ENCODE measurements at regions of chr15 and their contacts with region 1.

Region 1: DNA sequence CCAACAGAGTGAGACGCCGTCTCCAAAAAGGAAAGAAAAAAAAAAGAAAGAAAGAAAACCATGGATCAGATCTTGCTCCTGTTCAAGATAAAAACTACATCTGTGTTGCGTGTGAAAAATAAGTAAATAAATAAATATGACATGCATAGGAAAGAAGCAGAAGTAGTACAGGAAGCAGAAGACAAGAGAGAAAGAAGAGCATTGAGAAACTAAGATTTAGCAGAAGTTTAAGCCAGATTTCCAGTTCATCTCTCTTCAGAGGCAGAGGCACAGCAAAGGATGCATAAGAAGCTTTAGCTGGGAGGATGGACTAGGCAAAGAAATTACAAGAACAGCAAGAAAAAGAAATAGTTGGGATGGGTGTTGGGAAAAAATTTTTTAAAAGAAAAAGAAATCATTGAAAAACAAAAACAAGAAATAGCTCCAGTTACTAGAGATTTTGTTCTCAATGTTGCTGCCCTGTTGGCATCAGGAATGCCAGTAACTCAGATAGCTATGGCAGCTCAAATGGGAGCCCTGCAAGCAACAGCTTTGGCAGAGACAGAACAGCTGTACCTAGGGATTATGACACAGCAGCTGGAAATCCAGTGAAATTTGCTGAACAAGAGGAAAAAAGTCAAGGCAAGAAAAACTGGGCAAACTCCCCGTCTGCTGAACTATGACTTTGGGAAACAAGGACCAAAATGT is 17.3 kb downstream of the AP3S2 start:
- DNase-seq: no peak
- H3K4me3 ChIP-seq: no peak overlapping the region
- H3K27ac ChIP-seq: no peak overlapping the region
- H3K4me1 ChIP-seq: peaks cover 0 to 6% (median 0%) of the 10 kb centered on the region in 4 donors
- H3K27me3 ChIP-seq: no peaks in the 10 kb centered on the region
- CTCF ChIP-seq: no peak

Region 2: GRCh38 chr15:89749951-89750559 is 126.5 kb before region 1 on chr15:
- intact Hi-C with region 1: no loop called
- DNase-seq: no peak
- H3K4me3 ChIP-seq: peak overlapping the region; percentile 66 to 87
- H3K27ac ChIP-seq: peak overlapping the region; percentile 64 to 69
- H3K4me1 ChIP-seq: peaks cover 0 to 23% (median 14%) of the 10 kb centered on the region in 4 donors
- H3K27me3 ChIP-seq: peaks cover 0 to 38% of the 10 kb centered on the region in 2 donors
- CTCF ChIP-seq: no peak

Region 3: GRCh38 chr15:89760303-89761008 is 116.1 kb before region 1 on chr15:
- intact Hi-C with region 1: loop called (anchors 2 kb)
- DNase-seq: peak; percentile 79 to 85
- H3K4me3 ChIP-seq: no peak overlapping the region
- H3K27ac ChIP-seq: no peak overlapping the region
- H3K4me1 ChIP-seq: peaks cover 0 to 18% (median 0%) of the 10 kb centered on the region in 4 donors
- H3K27me3 ChIP-seq: peaks cover 0 to 11% of the 10 kb centered on the region in 2 donors
- CTCF ChIP-seq: peak; percentile 96 to 97

Region 4: DNA sequence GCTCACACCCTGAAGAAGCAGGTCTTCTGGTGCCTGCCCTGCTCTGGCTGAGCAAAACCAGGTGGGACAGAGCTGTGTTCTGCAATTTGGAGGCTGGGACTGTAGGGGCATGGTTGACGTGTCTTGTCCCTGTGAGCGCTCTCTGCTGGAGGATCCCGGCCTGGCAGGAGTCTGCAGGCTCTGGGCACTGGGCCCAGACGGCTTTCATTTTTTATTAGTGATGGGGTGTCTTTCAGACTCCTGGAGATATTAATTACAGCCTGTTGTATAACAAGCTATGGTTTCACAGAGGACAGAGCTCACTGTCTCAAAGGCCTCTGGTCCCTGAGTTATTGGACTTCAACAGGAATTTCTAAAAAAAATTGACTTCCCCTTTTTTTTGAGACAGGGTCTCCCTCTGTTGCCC is 95.1 kb after region 1 on chr15:
- intact Hi-C with region 1: no loop called
- DNase-seq: no peak
- H3K4me3 ChIP-seq: no peak overlapping the region
- H3K27ac ChIP-seq: no peak overlapping the region
- H3K4me1 ChIP-seq: no peaks in the 10 kb centered on the region
- H3K27me3 ChIP-seq: peaks cover 0 to 3% of the 10 kb centered on the region in 2 donors
- CTCF ChIP-seq: peak in 1 of 2 experiments; percentile 22

Region 5: GRCh38 chr15:90425726-90426346 is 549.3 kb after region 1 on chr15:
- intact Hi-C with region 1: no loop called
- DNase-seq: no peak
- H3K4me3 ChIP-seq: no peak overlapping the region
- H3K27ac ChIP-seq: peak overlapping the region; percentile 21 to 73
- H3K4me1 ChIP-seq: peaks cover 0 to 59% (median 39%) of the 10 kb centered on the region in 4 donors
- H3K27me3 ChIP-seq: no peaks in the 10 kb centered on the region
- CTCF ChIP-seq: no peak